ENCODE measurements at regions of chrX and their contacts with region 1.

Region 1: DNA sequence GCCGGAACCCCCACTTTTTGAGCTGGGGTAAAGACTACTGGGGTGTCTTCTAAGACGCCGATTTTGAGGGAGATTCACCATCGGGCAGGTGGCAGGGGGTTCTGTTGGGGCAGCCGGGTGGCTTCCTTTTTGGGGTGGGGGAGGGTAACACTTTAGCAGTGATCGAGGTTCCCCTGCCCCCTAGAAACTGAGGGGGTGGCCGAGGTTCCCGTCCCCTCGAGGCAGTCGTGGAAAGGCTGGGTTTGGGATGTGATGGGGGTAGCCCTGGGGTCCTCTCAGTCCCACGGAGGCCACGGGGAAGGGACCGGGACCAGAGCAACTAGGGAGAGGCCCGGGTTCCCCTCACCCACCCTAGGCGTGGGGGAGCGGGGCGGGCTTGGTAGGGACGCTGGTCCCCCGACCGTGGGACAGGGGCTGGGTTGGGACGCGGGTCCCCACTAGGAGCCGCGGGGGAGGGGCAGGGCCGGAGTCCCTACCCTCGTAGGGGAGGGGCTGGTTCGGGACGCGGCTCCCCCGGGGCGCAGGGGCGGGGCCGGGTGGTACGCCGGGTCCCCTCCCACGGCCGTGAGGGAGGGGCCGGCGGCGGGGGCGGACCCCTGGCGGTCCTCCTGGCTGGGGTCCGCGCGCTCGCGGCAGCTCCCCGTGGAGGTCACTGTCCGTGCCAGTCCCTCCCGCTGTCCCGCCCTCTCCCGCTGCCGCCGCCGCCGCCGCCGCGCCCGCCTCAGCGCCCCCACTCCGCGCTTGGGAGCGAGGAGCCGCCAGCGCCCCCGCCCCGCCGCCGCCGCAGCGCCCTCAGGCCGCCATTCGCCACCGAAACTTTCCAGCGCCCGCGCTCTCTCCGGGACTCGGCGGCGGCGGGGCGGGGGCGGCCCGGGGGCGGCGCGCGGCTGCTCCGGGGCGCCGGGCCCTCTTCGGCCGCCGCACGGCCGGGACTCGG is at the start of gene TBL1X:
- DNase-seq: peak in 8 of 9 experiments; percentile 25 to 67 (median 51)
- ATAC-seq: peak; percentile 34
- H3K4me3 ChIP-seq: peak within 1 kb of the TSS; percentile 60 to 70
- H3K4me3 Mint-ChIP-seq: peak within 1 kb of the TSS; percentile 83
- H3K27ac ChIP-seq: peak within 1 kb of the TSS in 1 of 2 experiments; percentile 63
- H3K27ac Mint-ChIP-seq: peak within 1 kb of the TSS; percentile 93
- H3K4me1 ChIP-seq: peaks cover 36% of the 10 kb centered on the region
- H3K4me1 Mint-ChIP-seq: peaks cover 44% of the 10 kb centered on the region
- H3K27me3 ChIP-seq: no peaks in the 10 kb centered on the region
- H3K27me3 Mint-ChIP-seq: no peaks in the 10 kb centered on the region
- CTCF ChIP-seq: no peak
- total RNA-seq, gene TBL1X: 18.0 to 19.3 TPM

Region 2: DNA sequence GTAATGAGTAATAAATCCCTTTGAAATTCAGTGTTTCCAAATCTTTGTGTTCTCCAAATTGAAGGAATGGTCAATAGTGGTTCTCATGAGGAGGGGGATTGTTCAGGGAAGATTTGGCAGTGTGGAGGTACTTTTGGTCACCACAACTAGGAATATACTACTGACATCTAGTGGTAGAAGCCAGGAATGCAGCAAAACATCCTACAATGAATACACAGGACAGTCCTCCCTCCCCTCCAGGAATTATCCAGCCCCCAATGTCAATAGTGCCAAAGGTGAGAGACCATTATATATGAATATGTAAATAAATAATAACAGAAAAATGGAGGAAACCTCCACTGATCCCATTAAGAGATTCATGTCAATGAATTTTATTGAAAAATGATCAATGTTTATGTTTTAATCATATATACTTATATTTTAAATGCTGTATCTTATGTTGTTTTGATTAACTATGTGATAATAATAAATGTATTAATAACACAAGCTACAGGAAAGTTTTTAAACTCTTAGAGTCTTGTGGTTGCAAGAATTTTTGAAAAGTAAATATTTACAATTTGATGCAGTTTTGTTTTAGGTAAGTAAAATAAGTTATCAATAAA is 649.1 kb before region 1 on chrX:
- CTCF ChIA-PET with region 1: no interaction called
- POLR2A ChIA-PET with region 1: no interaction called
- intact Hi-C with region 1: loop called in 1 of 2 experiments (anchors 5 kb)
- DNase-seq: peak in 3 of 9 experiments; percentile 25 to 57 (median 48)
- ATAC-seq: peak; percentile 31
- H3K4me3 ChIP-seq: no peak overlapping the region
- H3K4me3 Mint-ChIP-seq: no peak overlapping the region
- H3K27ac ChIP-seq: no peak overlapping the region
- H3K27ac Mint-ChIP-seq: no peak overlapping the region
- H3K4me1 ChIP-seq: no peaks in the 10 kb centered on the region
- H3K4me1 Mint-ChIP-seq: no peaks in the 10 kb centered on the region
- H3K27me3 ChIP-seq: no peaks in the 10 kb centered on the region
- H3K27me3 Mint-ChIP-seq: peaks cover 3% of the 10 kb centered on the region
- CTCF ChIP-seq: peak; percentile 75

Region 3: GRCh38 chrX:8988446-8988845 is 476.3 kb before region 1 on chrX:
- CTCF ChIA-PET with region 1: no interaction called
- POLR2A ChIA-PET with region 1: interaction called, 3 read pairs
- intact Hi-C with region 1: loop called (anchors 5 kb)
- DNase-seq: peak in 4 of 9 experiments; percentile 6 to 42 (median 24)
- ATAC-seq: peak; percentile 7
- H3K4me3 ChIP-seq: no peak overlapping the region
- H3K4me3 Mint-ChIP-seq: no peak overlapping the region
- H3K27ac ChIP-seq: peak overlapping the region in 1 of 2 experiments; percentile 14
- H3K27ac Mint-ChIP-seq: peak overlapping the region; percentile 96
- H3K4me1 ChIP-seq: peaks cover 26% of the 10 kb centered on the region
- H3K4me1 Mint-ChIP-seq: peaks cover 29% of the 10 kb centered on the region
- H3K27me3 ChIP-seq: no peaks in the 10 kb centered on the region
- H3K27me3 Mint-ChIP-seq: no peaks in the 10 kb centered on the region
- CTCF ChIP-seq: no peak

Region 4: GRCh38 chrX:9341291-9342201 is 123.2 kb before region 1 on chrX:
- CTCF ChIA-PET with region 1: interaction called, 3 read pairs
- POLR2A ChIA-PET with region 1: interaction called, 32 read pairs
- intact Hi-C with region 1: loop called (anchors 1 kb)
- DNase-seq: peak in 6 of 9 experiments; percentile 55 to 84 (median 74)
- ATAC-seq: peak; percentile 50
- H3K4me3 ChIP-seq: peak overlapping the region; percentile 35 to 46
- H3K4me3 Mint-ChIP-seq: peak overlapping the region; percentile 85
- H3K27ac ChIP-seq: peak overlapping the region; percentile 81
- H3K27ac Mint-ChIP-seq: peak overlapping the region; percentile 98
- H3K4me1 ChIP-seq: peaks cover 24% of the 10 kb centered on the region
- H3K4me1 Mint-ChIP-seq: peaks cover 37% of the 10 kb centered on the region
- H3K27me3 ChIP-seq: no peaks in the 10 kb centered on the region
- H3K27me3 Mint-ChIP-seq: no peaks in the 10 kb centered on the region
- CTCF ChIP-seq: no peak

Region 5: GRCh38 chrX:9501362-9501761 is 36.7 kb after region 1 on chrX:
- CTCF ChIA-PET with region 1: no interaction called
- POLR2A ChIA-PET with region 1: no interaction called
- intact Hi-C with region 1: loop called in 1 of 2 experiments (anchors 5 kb)
- DNase-seq: peak in 2 of 9 experiments; percentile 13 to 25
- ATAC-seq: no peak
- H3K4me3 ChIP-seq: no peak overlapping the region
- H3K4me3 Mint-ChIP-seq: no peak overlapping the region
- H3K27ac ChIP-seq: no peak overlapping the region
- H3K27ac Mint-ChIP-seq: no peak overlapping the region
- H3K4me1 ChIP-seq: no peaks in the 10 kb centered on the region
- H3K4me1 Mint-ChIP-seq: peaks cover 16% of the 10 kb centered on the region
- H3K27me3 ChIP-seq: no peaks in the 10 kb centered on the region
- H3K27me3 Mint-ChIP-seq: no peaks in the 10 kb centered on the region
- CTCF ChIP-seq: no peak

Region 6: GRCh38 chrX:9708904-9709553 is 244.3 kb after region 1 on chrX:
- CTCF ChIA-PET with region 1: no interaction called
- POLR2A ChIA-PET with region 1: no interaction called
- intact Hi-C with region 1: loop called (anchors 2 to 5 kb)
- DNase-seq: peak; percentile 48 to 89 (median 75)
- ATAC-seq: peak; percentile 75
- H3K4me3 ChIP-seq: no peak overlapping the region
- H3K4me3 Mint-ChIP-seq: no peak overlapping the region
- H3K27ac ChIP-seq: no peak overlapping the region
- H3K27ac Mint-ChIP-seq: peak overlapping the region; percentile 27
- H3K4me1 ChIP-seq: peaks cover 4% of the 10 kb centered on the region
- H3K4me1 Mint-ChIP-seq: peaks cover 13% of the 10 kb centered on the region
- H3K27me3 ChIP-seq: no peaks in the 10 kb centered on the region
- H3K27me3 Mint-ChIP-seq: no peaks in the 10 kb centered on the region
- CTCF ChIP-seq: peak; percentile 46

Region 7: DNA sequence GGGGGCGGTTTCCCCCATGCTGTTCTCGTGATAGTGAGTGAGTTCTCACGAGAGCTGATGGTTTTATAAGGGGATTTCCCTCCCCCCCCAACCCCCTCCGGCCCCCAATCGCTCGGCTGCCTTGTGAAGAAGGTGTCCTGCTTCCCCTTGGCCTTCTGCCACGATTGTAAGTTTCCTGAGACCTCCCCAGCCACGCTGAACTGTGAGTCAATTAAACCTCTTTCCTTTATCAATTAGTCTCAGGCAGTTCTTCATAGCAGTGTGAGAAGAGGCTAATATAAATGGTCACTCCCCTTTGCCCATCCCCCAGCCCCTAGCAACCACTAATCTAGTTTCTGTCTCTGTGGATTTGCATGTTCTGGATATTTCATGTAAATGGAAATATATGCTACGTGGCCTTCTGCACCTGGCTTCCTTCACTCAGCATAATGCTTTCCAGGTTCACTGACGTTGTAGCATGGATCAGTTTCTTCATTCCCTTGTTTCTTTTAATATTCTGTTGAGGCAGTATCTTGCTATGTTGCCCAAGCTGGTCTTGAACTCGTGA is 284.5 kb after region 1 on chrX:
- CTCF ChIA-PET with region 1: no interaction called
- POLR2A ChIA-PET with region 1: no interaction called
- intact Hi-C with region 1: no loop called
- DNase-seq: no peak
- ATAC-seq: no peak
- H3K4me3 ChIP-seq: no peak overlapping the region
- H3K4me3 Mint-ChIP-seq: no peak overlapping the region
- H3K27ac ChIP-seq: no peak overlapping the region
- H3K27ac Mint-ChIP-seq: no peak overlapping the region
- H3K4me1 ChIP-seq: no peaks in the 10 kb centered on the region
- H3K4me1 Mint-ChIP-seq: peaks cover 8% of the 10 kb centered on the region
- H3K27me3 ChIP-seq: no peaks in the 10 kb centered on the region
- H3K27me3 Mint-ChIP-seq: peaks cover 3% of the 10 kb centered on the region
- CTCF ChIP-seq: no peak